ENCODE measurements at regions of chr16 and their contacts with region 1.

Region 1: DNA sequence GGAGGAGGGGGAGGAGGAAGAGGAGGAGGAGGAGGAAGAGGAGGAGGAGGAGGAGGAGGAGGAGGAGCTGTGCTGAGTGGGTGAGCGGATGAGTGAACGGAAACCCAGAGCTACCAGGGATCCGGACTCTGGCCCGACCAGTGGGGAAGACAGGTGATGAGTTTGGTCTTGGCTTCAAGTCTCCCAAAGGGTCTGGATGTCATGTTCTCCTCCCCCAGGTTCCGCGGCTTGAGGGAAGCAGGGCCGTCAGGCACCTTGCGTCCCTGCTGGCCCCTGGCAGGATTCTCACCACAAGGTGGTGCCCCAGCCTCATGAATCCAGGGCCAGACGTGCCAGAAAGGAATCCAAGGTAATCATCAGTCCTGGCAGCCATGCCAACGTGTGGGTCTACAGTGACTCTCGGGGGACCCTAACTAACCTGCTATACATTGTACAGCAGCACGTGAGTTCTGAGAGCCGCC is 13.5 kb upstream of the ABAT start:
- ATAC-seq: peak; percentile 86 to 98 (median 91)
- H3K4me3 ChIP-seq: no peak overlapping the region
- H3K27ac ChIP-seq: no peak overlapping the region
- H3K4me1 ChIP-seq: peaks cover 0 to 9% of the 10 kb centered on the region in 2 donors

Region 2: GRCh38 chr16:8788578-8789172 is 127.8 kb after region 1 on chr16:
- in situ Hi-C with region 1: loop called in 7 of 9 experiments (anchors 10 to 25 kb)
- ATAC-seq: peak in 1 of 8 experiments; percentile 22
- H3K4me3 ChIP-seq: no peak overlapping the region
- H3K27ac ChIP-seq: no peak overlapping the region
- H3K4me1 ChIP-seq: no peaks in the 10 kb centered on the region

Region 3: GRCh38 chr16:8797364-8798173 is 136.7 kb after region 1 on chr16 and contains the starts of genes PMM2 and TMEM186:
- in situ Hi-C with region 1: loop called in 6 of 9 experiments (anchors 10 to 25 kb)
- ATAC-seq: peak; percentile 90 to 99 (median 97)
- H3K4me3 ChIP-seq: peak within 1 kb of the TSS; percentile 63 to 96 (median 89)
- H3K27ac ChIP-seq: peak within 1 kb of the TSS; percentile 94 to 99
- H3K4me1 ChIP-seq: peaks cover 12% of the 10 kb centered on the region in 2 donors
- total RNA-seq, gene PMM2: 14.5 to 58.6 (median 34.6) TPM
- total RNA-seq, gene TMEM186: 6.9 to 15.9 (median 10.0) TPM

Region 4: DNA sequence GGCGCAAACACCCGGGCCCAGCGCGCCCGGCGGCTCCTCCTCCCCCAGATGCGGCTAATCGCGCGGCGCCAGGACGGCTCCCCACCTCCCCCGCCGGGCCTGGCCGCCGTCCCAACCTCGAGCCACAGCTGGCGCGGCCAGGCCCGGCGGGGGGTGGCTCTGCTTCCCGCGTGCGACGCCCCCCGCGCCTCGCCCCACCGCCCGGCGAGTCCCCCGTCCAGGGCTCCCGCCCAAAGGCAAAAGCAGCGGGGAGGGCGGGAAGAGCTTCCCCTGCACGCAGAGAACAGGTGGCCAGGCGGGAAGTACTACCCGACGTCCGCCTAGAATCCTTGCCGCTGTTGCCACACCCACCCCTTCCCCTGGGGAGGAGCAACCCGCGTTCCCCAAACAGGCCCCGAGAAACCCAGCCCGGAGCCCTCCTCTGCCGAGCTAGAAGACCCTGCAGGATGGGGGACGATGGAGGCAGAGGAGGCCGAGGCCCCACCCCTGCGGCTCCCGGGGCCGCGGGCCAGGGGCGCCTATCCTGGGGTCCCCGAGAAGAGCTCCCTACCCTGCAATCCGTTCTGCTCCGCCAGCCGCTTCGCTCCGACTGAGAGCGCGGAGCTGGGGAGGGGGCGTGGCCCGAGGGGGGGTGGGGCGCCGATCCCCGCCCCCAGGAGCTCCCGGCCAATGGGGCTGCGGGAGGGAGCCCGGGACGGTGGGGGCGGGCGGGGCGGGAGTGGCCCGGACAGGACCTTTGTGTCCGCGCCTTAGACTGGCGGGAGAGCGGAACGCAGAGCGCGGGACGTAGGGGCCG is 207.7 kb after region 1 on chr16 and contains the start of gene CARHSP1:
- in situ Hi-C with region 1: no loop called
- ATAC-seq: peak; percentile 54 to 79 (median 60)
- H3K4me3 ChIP-seq: peak within 1 kb of the TSS; percentile 66 to 98 (median 79)
- H3K27ac ChIP-seq: peak within 1 kb of the TSS; percentile 46 to 86
- H3K4me1 ChIP-seq: peaks cover 10 to 28% of the 10 kb centered on the region in 2 donors
- total RNA-seq, gene CARHSP1: 38.5 to 196 (median 69.7) TPM

Region 5: GRCh38 chr16:9090960-9091866 is 430.3 kb after region 1 on chr16 and contains the start of gene HAPSTR1:
- in situ Hi-C with region 1: no loop called
- ATAC-seq: peak; percentile 77 to 92 (median 86)
- H3K4me3 ChIP-seq: peak within 1 kb of the TSS; percentile 57 to 94 (median 82)
- H3K27ac ChIP-seq: peak within 1 kb of the TSS; percentile 95 to 98
- H3K4me1 ChIP-seq: peaks cover 12 to 20% of the 10 kb centered on the region in 2 donors
- total RNA-seq, gene HAPSTR1: 31.3 to 74.1 (median 46.4) TPM

Measured in motor neuron (in vitro differentiated cells).